HepG2 (cell line): ENCODE measurements at regions of chr2 and their contacts with region 1.

Region 1: DNA sequence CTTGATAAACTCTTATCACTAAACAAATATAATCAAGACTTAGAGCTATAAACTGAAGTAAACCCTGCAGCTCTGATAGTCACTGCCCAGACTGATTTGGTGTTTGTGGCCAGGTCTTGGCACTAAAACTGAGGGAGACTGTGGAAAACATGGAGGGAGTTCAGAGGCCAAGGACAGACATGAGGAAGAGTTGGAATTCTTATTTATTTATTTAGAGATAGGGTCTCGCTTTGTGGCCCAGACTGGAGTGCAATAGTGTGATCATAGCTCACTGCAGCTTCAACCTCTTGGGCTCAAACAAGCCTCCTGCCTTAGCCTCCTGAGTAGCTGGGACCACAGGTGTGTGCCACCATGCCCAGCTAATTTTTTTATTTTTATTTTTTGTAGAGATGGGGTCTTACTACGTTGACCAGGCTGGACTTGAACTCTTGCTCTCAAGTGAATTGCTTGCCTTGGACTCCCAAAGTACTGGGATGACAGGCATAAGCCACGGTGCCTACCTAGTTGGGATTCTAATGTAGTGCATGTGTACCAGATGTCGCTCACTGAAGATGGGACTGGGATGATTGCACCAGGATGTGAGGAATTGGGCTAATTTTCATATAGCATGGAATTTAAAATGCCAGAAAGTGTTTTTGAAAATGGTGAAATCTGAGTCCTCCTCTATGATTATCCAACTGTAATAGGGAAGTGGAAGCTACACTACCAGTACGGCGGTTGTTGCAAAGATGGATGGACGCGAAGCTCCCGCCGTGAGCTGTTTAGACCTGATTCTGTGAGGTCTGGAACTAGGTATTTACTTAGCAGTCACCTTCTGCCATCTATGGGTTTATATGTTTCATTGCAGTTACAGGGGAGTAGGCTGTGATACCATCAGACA is 52.7 kb upstream of the CTLA4 start:
- DNase-seq: peak; percentile 88
- ATAC-seq: peak; percentile 68
- H3K4me3 ChIP-seq: peak overlapping the region in 1 of 3 experiments; percentile 34; a peak in 1 of 6 replicates
- H3K27ac ChIP-seq: peak overlapping the region; percentile 85
- H3K4me1 ChIP-seq: peaks cover 86% of the 10 kb centered on the region
- H3K27me3 ChIP-seq: no peaks in the 10 kb centered on the region
- CTCF ChIP-seq: peak; percentile 95
- EP300 ChIP-seq: peak in 1 of 2 experiments; percentile 59; a peak in 2 of 4 replicates
- POLR2A ChIP-seq: no peak
- RAD21 ChIP-seq: peak; percentile 94

Region 2: DNA sequence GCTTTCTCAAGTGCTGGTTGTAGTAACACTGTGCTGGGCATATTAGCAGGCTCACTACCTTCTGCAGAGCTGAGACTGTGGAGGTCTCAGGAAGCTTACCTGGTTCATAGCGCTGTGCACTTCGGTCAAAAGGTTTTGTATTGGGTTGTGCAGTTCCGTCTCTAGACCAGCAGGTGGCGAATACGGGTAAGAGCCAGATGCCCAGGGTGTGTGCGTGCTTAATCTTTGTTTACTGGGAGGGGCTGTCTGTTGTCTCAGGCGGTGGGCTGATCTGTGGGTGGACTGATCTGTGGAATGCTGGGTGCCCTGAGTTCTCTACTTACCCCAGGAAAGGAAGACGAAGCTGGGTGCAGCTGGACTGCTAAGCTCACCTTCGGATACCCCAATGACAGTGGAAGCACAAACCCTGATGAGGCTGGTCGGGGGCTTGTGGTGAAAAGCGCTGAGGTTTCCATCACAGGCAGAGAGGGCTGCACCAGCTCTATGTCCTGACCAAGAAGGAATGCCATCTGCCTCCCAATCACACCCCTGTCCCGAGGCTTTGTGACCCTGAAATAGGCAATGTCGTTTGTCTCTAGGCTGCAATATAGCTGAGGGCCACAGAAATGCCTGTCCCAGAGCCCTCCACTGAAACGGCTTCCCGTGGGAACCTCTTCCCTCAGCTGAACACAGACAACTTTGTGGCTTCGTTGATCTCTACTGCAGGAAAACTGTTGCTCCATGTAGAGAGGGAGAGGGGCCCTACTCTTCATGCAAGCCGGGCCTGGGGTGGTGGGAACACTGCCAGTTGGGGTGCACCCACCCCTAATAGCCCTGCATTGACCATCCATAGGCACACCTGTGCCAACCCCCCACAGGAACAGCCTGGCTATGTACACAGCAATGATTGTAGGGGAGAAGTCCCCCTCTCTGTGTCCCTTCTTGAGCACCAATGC is 1226.0 kb before region 1 on chr2:
- CTCF ChIA-PET with region 1: no interaction called
- POLR2A ChIA-PET with region 1: no interaction called
- in situ Hi-C with region 1: loop called (anchors 25 kb)
- intact Hi-C with region 1: no loop called
- DNase-seq: peak; percentile 89
- ATAC-seq: peak; percentile 92
- H3K4me3 ChIP-seq: peak overlapping the region; percentile 44 to 71 (median 54)
- H3K27ac ChIP-seq: no peak overlapping the region
- H3K4me1 ChIP-seq: peaks cover 20% of the 10 kb centered on the region
- H3K27me3 ChIP-seq: no peaks in the 10 kb centered on the region
- CTCF ChIP-seq: peak; percentile 99
- EP300 ChIP-seq: peak; percentile 43 to 44; a peak in 2 of 4 replicates
- POLR2A ChIP-seq: peak in 1 of 2 experiments; percentile 54; a peak in 2 of 4 replicates
- RAD21 ChIP-seq: peak; percentile 93

Region 3: DNA sequence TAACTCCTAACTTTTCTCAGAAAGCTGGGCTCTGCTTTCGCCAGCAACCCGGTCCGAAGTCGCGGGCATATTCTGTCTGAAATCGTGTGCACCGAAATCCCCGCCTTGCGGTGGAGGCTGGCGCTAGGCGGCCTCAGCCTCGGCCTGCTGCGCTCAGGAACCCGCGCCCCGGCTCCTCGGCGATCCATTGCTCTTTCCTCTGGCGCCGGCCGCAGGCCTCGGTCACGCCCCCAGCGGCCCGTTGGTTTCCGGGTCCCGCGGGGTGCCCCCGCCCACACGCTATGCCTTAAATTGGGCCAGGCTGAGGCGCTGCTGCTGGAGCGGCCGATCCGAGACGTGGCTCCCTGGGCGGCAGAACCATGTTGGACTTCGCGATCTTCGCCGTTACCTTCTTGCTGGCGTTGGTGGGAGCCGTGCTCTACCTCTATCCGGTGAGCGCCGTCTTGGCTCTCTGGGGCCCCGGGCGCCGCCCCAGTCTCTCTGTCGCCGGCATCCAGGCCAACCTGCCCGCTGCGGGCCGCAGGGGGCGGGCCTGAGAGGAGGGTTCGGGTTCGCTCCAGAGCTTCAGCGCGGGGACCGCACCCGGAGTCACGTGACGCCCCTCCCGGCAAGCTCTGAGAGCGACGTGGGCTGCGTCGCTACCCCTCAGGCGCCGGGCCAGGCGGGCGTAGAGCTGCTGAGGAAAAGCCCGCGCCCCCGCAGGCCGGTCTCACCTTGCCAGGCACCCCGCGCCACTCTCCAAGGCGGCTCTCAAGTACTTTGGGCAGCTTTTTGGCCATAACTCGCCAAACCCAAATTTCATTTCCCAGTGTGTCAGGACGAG is 576.0 kb before region 1 on chr2 and contains the start of gene CYP20A1:
- CTCF ChIA-PET with region 1: no interaction called
- POLR2A ChIA-PET with region 1: interaction called, 8 read pairs
- in situ Hi-C with region 1: loop called (anchors 5 kb)
- intact Hi-C with region 1: loop called (anchors 5 kb)
- DNase-seq: peak; percentile 93
- ATAC-seq: peak; percentile 94
- H3K4me3 ChIP-seq: peak within 1 kb of the TSS; percentile 78 to 83 (median 79)
- H3K27ac ChIP-seq: peak within 1 kb of the TSS; percentile 94
- H3K4me1 ChIP-seq: peaks cover 31% of the 10 kb centered on the region
- H3K27me3 ChIP-seq: no peaks in the 10 kb centered on the region
- CTCF ChIP-seq: peak; percentile 75
- EP300 ChIP-seq: peak; percentile 38 to 40; a peak in 2 of 4 replicates
- POLR2A ChIP-seq: peak; percentile 99
- RAD21 ChIP-seq: peak; percentile 52
- total RNA-seq, gene CYP20A1: 32.8 and 35.3 TPM in 2 replicates

Region 4: GRCh38 chr2:203535078-203535783 is 279.7 kb before region 1 on chr2 and contains the start of gene RAPH1:
- CTCF ChIA-PET with region 1: no interaction called
- POLR2A ChIA-PET with region 1: interaction called, 27 read pairs
- in situ Hi-C with region 1: no loop called
- intact Hi-C with region 1: loop called (anchors 1 kb)
- DNase-seq: peak; percentile 75
- ATAC-seq: peak; percentile 92
- H3K4me3 ChIP-seq: peak within 1 kb of the TSS; percentile 97 to 99 (median 97)
- H3K27ac ChIP-seq: peak within 1 kb of the TSS; percentile 85
- H3K4me1 ChIP-seq: peaks cover 30% of the 10 kb centered on the region
- H3K27me3 ChIP-seq: no peaks in the 10 kb centered on the region; a peak in 1 of 5 replicates
- CTCF ChIP-seq: peak; percentile 12; the same call in 1 of the 2 replicates
- EP300 ChIP-seq: no peak; a peak in 1 of 4 replicates
- POLR2A ChIP-seq: peak; percentile 70 to 79
- RAD21 ChIP-seq: peak; percentile 43
- total RNA-seq, gene RAPH1: 6.7 and 17.9 TPM in 2 replicates

Region 5: DNA sequence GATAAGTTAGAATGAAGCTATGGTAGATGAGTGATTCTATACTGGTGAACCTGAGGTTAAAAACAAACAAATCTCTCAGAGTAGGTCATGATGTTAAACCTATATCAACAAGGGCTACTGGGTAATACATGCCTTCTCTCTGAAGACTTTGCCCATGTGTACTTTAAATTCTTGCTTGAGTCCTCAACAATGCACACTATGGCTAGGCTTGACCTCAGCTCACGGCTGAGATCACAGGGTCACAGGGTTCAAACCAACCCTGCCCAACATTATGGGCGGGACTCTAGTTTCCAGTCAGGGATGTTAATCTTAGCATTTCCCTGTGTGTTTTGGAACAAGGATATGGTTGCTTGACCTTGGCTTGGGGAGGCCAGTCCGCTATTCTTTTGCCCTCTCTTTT is 100.8 kb before region 1 on chr2:
- CTCF ChIA-PET with region 1: no interaction called
- POLR2A ChIA-PET with region 1: no interaction called
- in situ Hi-C with region 1: no loop called
- intact Hi-C with region 1: loop called (anchors 1 kb)
- DNase-seq: peak; percentile 74
- ATAC-seq: peak; percentile 84
- H3K4me3 ChIP-seq: no peak overlapping the region
- H3K27ac ChIP-seq: no peak overlapping the region
- H3K4me1 ChIP-seq: peaks cover 27% of the 10 kb centered on the region
- H3K27me3 ChIP-seq: no peaks in the 10 kb centered on the region
- CTCF ChIP-seq: no peak
- EP300 ChIP-seq: peak in 1 of 2 experiments; percentile 61; a peak in 1 of 4 replicates
- POLR2A ChIP-seq: no peak
- RAD21 ChIP-seq: no peak